Cardiac septum (tissue), 1 donor: ENCODE measurements at regions of chr13 and their contacts with region 1.

Region 1: GRCh38 chr13:43878892-43879754 is at the start of gene CCDC122:
- DNase-seq: peak; percentile 93
- total RNA-seq, gene CCDC122: 8.9 TPM

Region 2: DNA sequence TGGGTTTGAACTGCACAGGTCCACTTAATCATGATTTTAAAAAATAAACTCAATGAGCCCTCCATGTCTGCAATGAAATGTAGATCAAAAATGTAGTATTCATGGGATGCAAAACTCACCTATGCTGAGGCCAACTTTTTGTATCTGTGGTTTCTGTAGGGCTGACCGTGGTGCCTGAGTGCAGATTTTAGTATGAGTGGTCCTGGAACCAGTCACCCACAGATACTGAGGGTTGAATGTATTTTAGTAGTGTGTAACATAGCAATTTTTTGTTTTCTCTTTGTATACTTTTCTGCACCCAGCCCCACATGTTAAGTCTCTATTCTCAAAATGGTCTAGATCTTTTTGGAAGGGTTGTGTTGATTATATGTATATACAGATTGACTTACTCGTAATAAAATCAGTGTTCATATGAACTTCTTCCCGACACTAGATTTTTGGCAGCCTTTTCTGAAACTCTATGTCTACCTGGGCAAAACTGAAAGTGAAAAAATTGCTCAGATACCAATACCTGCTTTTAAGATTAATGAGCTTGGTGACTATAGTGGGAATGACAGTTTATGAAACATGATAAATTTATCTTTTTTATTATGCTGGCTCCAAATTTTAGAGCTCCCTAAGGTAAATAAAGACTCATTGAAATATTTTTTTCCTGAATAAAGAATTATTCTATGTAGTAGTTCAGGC is 804.2 kb before region 1 on chr13:
- intact Hi-C with region 1: loop called (anchors 10 kb)
- DNase-seq: no peak

Region 3: DNA sequence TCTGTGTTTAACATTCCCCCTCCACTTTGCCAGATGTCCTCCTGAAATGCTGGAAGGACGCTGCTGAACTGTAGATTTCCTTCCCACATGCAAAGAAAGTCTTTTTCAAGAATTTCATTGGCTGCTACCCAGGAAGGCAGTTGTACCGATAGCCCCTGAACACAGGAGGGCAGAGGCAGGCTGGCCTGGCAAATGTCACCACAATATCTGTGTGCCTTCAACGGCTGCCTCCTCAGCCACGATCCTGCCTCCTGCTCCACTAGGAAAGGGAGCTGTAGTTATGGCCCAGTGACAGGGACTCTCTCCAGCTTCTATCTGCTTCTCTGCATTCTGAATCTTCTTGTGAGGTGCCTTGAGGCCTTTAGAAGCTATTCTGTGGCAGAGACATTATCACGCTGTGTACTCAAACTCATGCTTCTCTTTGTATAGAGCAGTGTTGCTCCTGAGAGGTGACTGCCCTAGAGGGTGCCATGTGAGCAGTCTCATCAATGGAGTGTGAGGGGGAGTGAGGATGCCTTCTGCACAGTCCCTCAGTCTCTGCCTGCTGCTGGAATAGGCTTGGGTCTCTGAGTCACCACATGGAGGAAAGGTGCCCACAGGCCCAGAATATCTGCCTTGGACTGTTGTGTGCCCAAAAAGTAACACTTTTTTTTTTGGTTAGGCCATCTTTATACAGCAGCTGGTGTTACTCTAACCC is 575.9 kb before region 1 on chr13:
- intact Hi-C with region 1: loop called (anchors 10 kb)
- DNase-seq: no peak